Activated CD4-positive, alpha-beta T cell treated with anti-CD3 and anti-CD28 coated beads, Interleukin-2, amount 10 ng/mL, durations not matched to agents 24 days and 14 days (primary cell): ENCODE measurements at regions of chr9 and their contacts with region 1.

Region 1: DNA sequence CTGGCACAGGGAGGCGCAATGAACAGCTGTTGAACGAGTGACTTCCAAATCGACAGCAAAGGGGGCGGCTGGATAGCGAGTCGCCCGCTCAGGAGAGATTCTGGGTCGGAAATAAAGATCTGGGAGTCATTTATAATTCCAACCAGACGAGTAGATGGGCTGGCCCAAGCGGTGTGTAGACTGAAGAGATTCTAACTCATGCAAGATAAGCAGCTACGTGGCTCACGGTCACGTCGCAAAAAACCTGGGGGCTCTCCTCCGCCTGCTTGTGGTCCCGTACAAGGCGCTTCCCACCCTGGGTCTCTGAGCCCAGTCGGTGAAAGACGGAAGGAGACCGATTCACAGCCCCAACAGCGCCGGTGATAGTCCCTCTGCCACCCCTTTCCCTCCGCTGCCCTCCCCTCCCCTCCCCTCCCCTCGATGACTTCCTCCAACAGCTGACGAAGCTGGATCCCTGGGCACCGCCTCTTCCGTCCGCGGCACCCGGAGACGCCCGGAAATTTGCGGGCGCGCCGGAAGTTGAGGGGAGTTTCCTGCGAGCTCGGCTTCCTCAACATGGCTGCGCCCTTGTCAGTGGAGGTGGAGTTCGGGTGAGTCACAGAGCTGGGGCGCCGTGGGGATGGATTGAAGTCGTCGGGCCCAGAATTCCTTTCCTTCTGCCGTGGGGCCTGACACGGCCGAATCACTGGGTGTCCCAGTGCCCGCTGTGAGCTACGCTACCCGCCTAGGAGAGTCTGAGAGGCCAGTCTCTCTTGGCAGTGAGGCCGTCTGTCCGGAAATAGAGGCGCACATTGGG is at the start of gene URM1:
- DNase-seq: peak; percentile 99
- H3K4me3 Mint-ChIP-seq: peak within 1 kb of the TSS; percentile 99
- H3K27ac Mint-ChIP-seq: peak within 1 kb of the TSS; percentile 93
- H3K4me1 Mint-ChIP-seq: peaks cover 29% of the 10 kb centered on the region
- H3K27me3 Mint-ChIP-seq: no peaks in the 10 kb centered on the region
- total RNA-seq, gene URM1: 87.2 and 98.3 TPM in 2 replicates

Region 2: GRCh38 chr9:128159784-128160602 is 211.0 kb before region 1 on chr9 and contains the start of gene BBLN:
- intact Hi-C with region 1: loop called (anchors 1 kb)
- DNase-seq: peak; percentile 98
- H3K4me3 Mint-ChIP-seq: peak within 1 kb of the TSS; percentile 83
- H3K27ac Mint-ChIP-seq: peak within 1 kb of the TSS; percentile 91
- H3K4me1 Mint-ChIP-seq: peaks cover 23% of the 10 kb centered on the region
- H3K27me3 Mint-ChIP-seq: no peaks in the 10 kb centered on the region
- total RNA-seq, gene BBLN: 89.3 and 91.4 TPM in 2 replicates

Region 3: GRCh38 chr9:128322404-128323211 is 48.4 kb before region 1 on chr9 and contains the starts of genes COQ4 and TRUB2:
- intact Hi-C with region 1: loop called (anchors 1 kb)
- DNase-seq: peak; percentile 98
- H3K4me3 Mint-ChIP-seq: peak within 1 kb of the TSS; percentile 91
- H3K27ac Mint-ChIP-seq: peak within 1 kb of the TSS; percentile 97
- H3K4me1 Mint-ChIP-seq: peaks cover 9% of the 10 kb centered on the region
- H3K27me3 Mint-ChIP-seq: no peaks in the 10 kb centered on the region
- total RNA-seq, gene COQ4: 60.7 and 61.4 TPM in 2 replicates
- total RNA-seq, gene TRUB2: 40.4 and 43.0 TPM in 2 replicates

Region 4: GRCh38 chr9:128339771-128340690 is 31.0 kb before region 1 on chr9 and contains the start of gene SLC27A4:
- intact Hi-C with region 1: loop called (anchors 2 kb)
- DNase-seq: peak; percentile 96
- H3K4me3 Mint-ChIP-seq: peak within 1 kb of the TSS; percentile 88
- H3K27ac Mint-ChIP-seq: peak within 1 kb of the TSS; percentile 92
- H3K4me1 Mint-ChIP-seq: peaks cover 6% of the 10 kb centered on the region
- H3K27me3 Mint-ChIP-seq: no peaks in the 10 kb centered on the region
- total RNA-seq, gene SLC27A4: 37.0 and 37.9 TPM in 2 replicates

Region 5: DNA sequence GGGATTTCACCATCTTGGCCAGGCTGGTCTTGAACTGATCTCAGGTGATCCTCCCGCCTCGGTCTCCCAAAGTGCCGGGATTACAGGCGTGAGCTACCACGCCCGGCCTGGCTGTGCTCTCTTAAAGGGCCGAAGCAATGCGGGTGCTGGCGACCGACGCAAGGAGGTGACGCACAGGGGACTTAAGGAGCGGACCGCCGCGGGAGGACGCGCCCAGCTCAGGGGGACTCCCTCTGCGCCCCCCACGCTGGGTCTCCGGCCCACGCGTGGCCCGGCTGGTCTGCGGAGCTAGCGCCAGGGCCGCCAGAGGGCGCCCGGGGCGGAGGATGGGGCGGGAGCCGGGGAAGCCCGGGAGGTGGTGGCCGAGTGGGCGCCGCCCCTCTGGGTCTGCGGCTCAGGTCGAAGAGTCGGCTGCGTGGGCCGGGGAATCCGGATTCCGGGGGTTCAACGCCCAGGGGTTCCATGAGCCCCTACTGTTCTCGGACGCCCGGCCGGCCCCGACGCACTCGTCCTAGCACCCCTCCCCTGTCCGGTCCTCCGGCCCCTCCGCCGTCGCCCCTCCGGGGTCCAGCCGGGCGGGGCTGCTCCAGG is 49.1 kb after region 1 on chr9:
- intact Hi-C with region 1: loop called (anchors 1 kb)
- DNase-seq: peak; percentile 93
- H3K4me3 Mint-ChIP-seq: peak overlapping the region; percentile 81
- H3K27ac Mint-ChIP-seq: peak overlapping the region; percentile 20
- H3K4me1 Mint-ChIP-seq: peaks cover 12% of the 10 kb centered on the region
- H3K27me3 Mint-ChIP-seq: peaks cover 42% of the 10 kb centered on the region

Region 6: GRCh38 chr9:128438343-128439109 is 67.5 kb after region 1 on chr9:
- intact Hi-C with region 1: no loop called
- DNase-seq: peak; percentile 96
- H3K4me3 Mint-ChIP-seq: no peak overlapping the region
- H3K27ac Mint-ChIP-seq: no peak overlapping the region
- H3K4me1 Mint-ChIP-seq: peaks cover 7% of the 10 kb centered on the region
- H3K27me3 Mint-ChIP-seq: no peaks in the 10 kb centered on the region

Region 7: GRCh38 chr9:128455849-128456612 is 85.0 kb after region 1 on chr9 and contains the start of gene ODF2:
- intact Hi-C with region 1: loop called (anchors 1 kb)
- DNase-seq: peak; percentile 100
- H3K4me3 Mint-ChIP-seq: peak within 1 kb of the TSS; percentile 91
- H3K27ac Mint-ChIP-seq: peak within 1 kb of the TSS; percentile 94
- H3K4me1 Mint-ChIP-seq: peaks cover 20% of the 10 kb centered on the region
- H3K27me3 Mint-ChIP-seq: no peaks in the 10 kb centered on the region
- total RNA-seq, gene ODF2: 60.8 and 64.8 TPM in 2 replicates

Region 8: DNA sequence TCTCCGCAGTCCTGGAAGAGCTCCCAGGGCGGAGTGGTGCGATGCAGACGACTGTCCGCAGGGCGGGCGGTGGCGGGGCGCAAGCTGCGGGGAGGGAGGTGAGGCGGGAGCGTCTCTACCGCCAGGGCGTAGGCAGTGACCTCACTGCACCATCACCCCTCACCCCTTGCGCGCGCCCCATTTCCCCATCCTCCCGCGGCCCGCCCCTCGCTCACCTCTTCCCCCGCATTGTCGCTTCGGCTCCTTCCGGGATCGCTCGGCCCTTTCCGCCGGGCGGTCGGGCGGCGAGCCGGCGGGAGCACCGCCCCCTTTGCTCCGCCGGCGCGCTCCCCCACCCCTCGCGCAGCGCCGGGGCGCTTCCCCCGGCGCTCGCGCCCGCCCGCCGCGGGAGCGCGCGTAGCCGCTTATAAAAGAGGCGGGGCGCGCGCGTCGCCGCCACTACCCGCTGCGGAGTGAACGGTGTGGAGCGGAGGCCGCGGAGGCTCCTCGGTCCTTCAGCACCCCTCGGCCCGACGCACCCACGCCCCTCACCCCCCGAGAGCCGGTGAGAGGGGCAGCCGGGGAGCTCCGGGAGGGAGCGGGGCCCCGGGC is 181.2 kb after region 1 on chr9 and contains the start of gene SPTAN1:
- intact Hi-C with region 1: loop called (anchors 5 kb)
- DNase-seq: peak; percentile 99
- H3K4me3 Mint-ChIP-seq: no peak within 1 kb of the TSS
- H3K27ac Mint-ChIP-seq: peak within 1 kb of the TSS; percentile 98
- H3K4me1 Mint-ChIP-seq: peaks cover 36% of the 10 kb centered on the region
- H3K27me3 Mint-ChIP-seq: no peaks in the 10 kb centered on the region
- total RNA-seq, gene SPTAN1: 240 and 249 TPM in 2 replicates